A549 (cell line): ENCODE measurements at regions of chr14 and their contacts with region 1.

Region 1: DNA sequence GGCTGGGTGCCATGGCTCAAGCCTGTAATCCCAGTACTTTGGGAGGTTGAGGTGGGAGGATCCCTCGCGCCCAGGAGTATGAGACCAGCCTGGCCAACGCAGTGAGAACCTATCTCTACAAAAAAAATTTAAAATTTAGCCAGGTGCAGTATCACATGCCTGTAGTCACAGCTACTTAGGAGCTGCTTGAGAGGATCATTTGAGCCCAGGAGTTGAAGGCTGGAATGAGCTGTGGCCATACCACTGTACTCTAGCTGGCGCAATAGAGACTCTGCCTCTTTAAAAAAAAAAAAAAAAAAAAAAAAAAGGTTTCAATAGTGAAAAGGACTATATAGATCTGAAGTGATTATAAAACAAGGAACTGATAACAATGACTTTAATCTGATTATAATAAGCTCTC is 13.5 kb downstream of the PSMA3 start:
- DNase-seq: no peak
- ATAC-seq: peak; percentile 69 to 75; a peak in 4 of 6 replicates
- H3K4me3 ChIP-seq: no peak overlapping the region
- H3K27ac ChIP-seq: no peak overlapping the region
- H3K4me1 ChIP-seq: no peaks in the 10 kb centered on the region
- CTCF ChIP-seq: no peak
- EP300 ChIP-seq: no peak
- POLR2A ChIP-seq: no peak
- RAD21 ChIP-seq: no peak

Region 2: DNA sequence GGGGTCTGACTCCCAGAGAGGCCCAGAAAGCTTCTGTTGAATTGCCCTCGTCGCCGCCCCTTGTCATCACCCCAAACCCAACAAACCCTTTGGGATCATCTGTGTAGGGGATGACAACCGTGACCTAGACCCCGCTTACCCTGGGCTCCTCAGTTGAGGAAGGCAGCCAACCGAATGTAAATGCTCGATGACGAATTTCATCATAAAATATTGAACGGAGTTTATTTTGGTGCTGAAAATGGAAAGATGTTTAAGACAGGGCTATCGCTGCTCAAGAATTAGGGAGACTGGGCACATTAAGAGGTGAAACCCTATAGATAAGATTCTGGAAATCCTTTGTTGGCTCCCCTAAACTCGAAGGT is 57.7 kb before region 1 on chr14:
- CTCF ChIA-PET with region 1: no interaction called
- POLR2A ChIA-PET with region 1: no interaction called
- DNase-seq: no peak
- ATAC-seq: peak; percentile 33 to 44; a peak in 5 of 6 replicates
- H3K4me3 ChIP-seq: peak overlapping the region; percentile 64
- H3K27ac ChIP-seq: peak overlapping the region; percentile 94 to 97
- H3K4me1 ChIP-seq: peaks cover 8% of the 10 kb centered on the region; the same call in 2 of the 3 replicates
- CTCF ChIP-seq: no peak
- EP300 ChIP-seq: no peak
- POLR2A ChIP-seq: no peak
- RAD21 ChIP-seq: no peak

Region 3: GRCh38 chr14:58244556-58245387 is 13.4 kb before region 1 on chr14 and contains the start of gene PSMA3:
- CTCF ChIA-PET with region 1: interaction called, 4 read pairs
- POLR2A ChIA-PET with region 1: interaction called, 20 read pairs
- DNase-seq: peak; percentile 96
- ATAC-seq: peak; percentile 95 to 97
- H3K4me3 ChIP-seq: peak within 1 kb of the TSS; percentile 60
- H3K27ac ChIP-seq: peak within 1 kb of the TSS; percentile 84 to 98
- H3K4me1 ChIP-seq: peaks cover 27% of the 10 kb centered on the region
- CTCF ChIP-seq: no peak
- EP300 ChIP-seq: no peak
- POLR2A ChIP-seq: peak; percentile 75
- RAD21 ChIP-seq: no peak
- polyA plus RNA-seq, gene PSMA3: 410 and 411 TPM in 2 replicates

Region 4: GRCh38 chr14:58281969-58282368 is 23.8 kb after region 1 on chr14:
- CTCF ChIA-PET with region 1: no interaction called
- POLR2A ChIA-PET with region 1: no interaction called
- DNase-seq: peak in 1 of 2 experiments; percentile 18
- ATAC-seq: peak; percentile 41 to 54; a peak in 4 of 6 replicates
- H3K4me3 ChIP-seq: no peak overlapping the region
- H3K27ac ChIP-seq: peak overlapping the region; percentile 4 to 62; a peak in 4 of 6 replicates
- H3K4me1 ChIP-seq: peaks cover 44% of the 10 kb centered on the region
- CTCF ChIP-seq: no peak
- EP300 ChIP-seq: no peak
- POLR2A ChIP-seq: no peak
- RAD21 ChIP-seq: no peak